Transverse colon (tissue), 4 donors: ENCODE measurements at regions of chr10 and their contacts with region 1.

Region 1: GRCh38 chr10:128147064-128147463 is 20.8 kb upstream of the MKI67 start:
- DNase-seq: no peak
- H3K4me3 ChIP-seq: no peak overlapping the region
- H3K27ac ChIP-seq: no peak overlapping the region
- H3K4me1 ChIP-seq: peaks cover 0 to 10% (median 7%) of the 10 kb centered on the region in 4 donors
- H3K27me3 ChIP-seq: peaks cover 21% of the 10 kb centered on the region
- CTCF ChIP-seq: no peak
- EP300 ChIP-seq: no peak
- POLR2A ChIP-seq: no peak

Region 2: GRCh38 chr10:127736915-127737562 is 410.0 kb before region 1 on chr10 and contains the start of gene FOXI2:
- in situ Hi-C with region 1: no loop called
- intact Hi-C with region 1: no loop called
- DNase-seq: no peak
- H3K4me3 ChIP-seq: peak within 1 kb of the TSS in 1 of 4 donors; percentile 21
- H3K27ac ChIP-seq: no peak within 1 kb of the TSS
- H3K4me1 ChIP-seq: peaks cover 0 to 7% (median 0%) of the 10 kb centered on the region in 4 donors
- H3K27me3 ChIP-seq: peaks cover 80% of the 10 kb centered on the region
- CTCF ChIP-seq: no peak
- EP300 ChIP-seq: no peak
- POLR2A ChIP-seq: no peak
- total RNA-seq, gene FOXI2: 0.14 TPM in 1 of 4 donors, not detected in the others

Region 3: GRCh38 chr10:127945948-127946711 is 200.9 kb before region 1 on chr10:
- in situ Hi-C with region 1: no loop called
- intact Hi-C with region 1: no loop called
- DNase-seq: no peak
- H3K4me3 ChIP-seq: no peak overlapping the region
- H3K27ac ChIP-seq: peak overlapping the region in 2 of 4 donors; percentile 1 to 12
- H3K4me1 ChIP-seq: peaks cover 0 to 17% (median 5%) of the 10 kb centered on the region in 4 donors
- H3K27me3 ChIP-seq: no peaks in the 10 kb centered on the region
- CTCF ChIP-seq: no peak
- EP300 ChIP-seq: no peak
- POLR2A ChIP-seq: no peak

Region 4: DNA sequence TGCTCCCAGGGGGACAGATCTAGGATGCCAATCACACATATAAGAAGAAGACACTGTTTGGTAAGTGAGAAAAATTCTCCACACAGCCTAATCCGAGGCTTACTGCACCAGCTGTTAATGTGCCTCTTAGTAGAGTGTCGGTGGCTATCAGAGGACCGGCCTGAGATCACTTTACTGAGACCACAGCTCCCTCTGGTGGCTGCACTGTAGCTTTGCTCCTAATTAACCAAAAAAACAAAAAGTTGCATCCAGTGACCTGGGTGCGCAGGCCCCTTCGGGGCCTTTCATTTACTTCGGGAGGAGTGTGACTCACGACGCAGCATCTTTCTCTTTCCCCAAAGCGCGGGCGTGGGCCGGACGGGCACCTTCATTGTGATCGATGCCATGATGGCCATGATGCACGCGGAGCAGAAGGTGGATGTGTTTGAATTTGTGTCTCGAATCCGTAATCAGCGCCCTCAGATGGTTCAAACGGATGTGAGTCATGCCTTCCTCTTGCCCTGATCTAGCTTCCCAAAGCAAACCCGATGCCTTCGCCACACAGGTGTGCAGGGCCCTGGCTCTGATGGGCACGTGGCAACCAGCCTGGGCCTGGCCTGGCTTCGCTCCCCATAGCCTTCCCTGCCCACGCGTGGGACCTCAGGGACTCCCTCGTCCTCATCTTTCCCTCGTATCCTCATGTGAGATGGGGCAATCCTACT is 77.6 kb before region 1 on chr10:
- in situ Hi-C with region 1: loop called in 1 of 4 experiments (anchors 10 kb)
- intact Hi-C with region 1: no loop called
- DNase-seq: peak; percentile 80
- H3K4me3 ChIP-seq: no peak overlapping the region
- H3K27ac ChIP-seq: no peak overlapping the region
- H3K4me1 ChIP-seq: peaks cover 0 to 11% (median 0%) of the 10 kb centered on the region in 4 donors
- H3K27me3 ChIP-seq: no peaks in the 10 kb centered on the region
- CTCF ChIP-seq: peak; percentile 79 to 88 (median 83)
- EP300 ChIP-seq: no peak
- POLR2A ChIP-seq: no peak

Region 5: GRCh38 chr10:128087884-128088709 is 59.0 kb before region 1 on chr10:
- in situ Hi-C with region 1: loop called in 1 of 4 experiments (anchors 10 kb)
- intact Hi-C with region 1: no loop called
- DNase-seq: no peak
- H3K4me3 ChIP-seq: no peak overlapping the region
- H3K27ac ChIP-seq: no peak overlapping the region
- H3K4me1 ChIP-seq: no peaks in the 10 kb centered on the region
- H3K27me3 ChIP-seq: no peaks in the 10 kb centered on the region
- CTCF ChIP-seq: no peak
- EP300 ChIP-seq: no peak
- POLR2A ChIP-seq: no peak